Spleen (tissue), 13 donors: ENCODE measurements at regions of chr11 and their contacts with region 1.

Region 1: DNA sequence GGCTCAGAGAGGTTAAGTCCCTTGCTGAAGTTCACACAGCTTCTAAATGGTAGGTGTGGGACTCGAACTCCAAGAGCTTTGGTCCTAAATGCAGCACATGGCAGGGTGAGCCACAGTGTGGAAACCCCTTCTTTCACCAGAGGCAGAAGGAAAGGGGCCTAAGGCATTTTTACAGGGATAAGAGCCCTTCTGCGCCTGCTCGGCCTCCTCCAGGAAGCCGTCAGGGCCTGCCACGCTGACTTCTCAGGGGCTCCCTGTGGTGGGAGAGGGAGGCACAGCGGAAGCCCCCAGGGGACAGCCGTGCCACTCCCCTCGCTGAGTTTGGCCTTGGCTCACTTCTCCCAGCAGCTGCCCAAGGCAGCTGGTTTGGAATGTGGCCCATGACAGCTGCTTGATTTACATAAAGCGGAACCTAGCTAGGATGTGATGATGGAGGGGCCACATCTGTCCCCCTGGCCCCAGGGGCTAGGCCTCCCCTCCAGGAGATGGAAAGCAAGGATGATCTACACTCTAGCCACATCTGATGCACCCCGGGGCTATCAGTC is 35.4 kb downstream of the CD82 start:
- DNase-seq: peak; percentile 88
- H3K4me3 ChIP-seq: no peak overlapping the region
- H3K27ac ChIP-seq: peak overlapping the region in 6 of 8 donors; percentile 23 to 87 (median 68)
- H3K4me1 ChIP-seq: peaks cover 37 to 94% (median 79%) of the 10 kb centered on the region in 6 donors
- H3K27me3 ChIP-seq: no peaks in the 10 kb centered on the region
- CTCF ChIP-seq: no peak
- POLR2A ChIP-seq: no peak

Region 2: GRCh38 chr11:44565211-44565952 is 35.5 kb before region 1 on chr11 and contains the start of gene CD82:
- intact Hi-C with region 1: loop called (anchors 5 kb)
- DNase-seq: peak; percentile 100
- H3K4me3 ChIP-seq: peak within 1 kb of the TSS; percentile 48 to 76 (median 66)
- H3K27ac ChIP-seq: peak within 1 kb of the TSS; percentile 82 to 95 (median 88)
- H3K4me1 ChIP-seq: peaks cover 36 to 82% (median 61%) of the 10 kb centered on the region in 6 donors
- H3K27me3 ChIP-seq: no peaks in the 10 kb centered on the region
- CTCF ChIP-seq: peak in 8 of 11 experiments; percentile 21 to 83 (median 59)
- POLR2A ChIP-seq: peak in 2 of 3 donors; percentile 20 to 81
- total RNA-seq, gene CD82: 65.3 to 174 (median 125) TPM